Adrenal gland (tissue), 19 donors: ENCODE measurements at regions of chr2 and their contacts with region 1.

Region 1: GRCh38 chr2:69643602-69644505 is at the start of gene AAK1:
- DNase-seq: peak; percentile 86 to 92 (median 90)
- H3K4me3 ChIP-seq: peak within 1 kb of the TSS; percentile 71 to 90 (median 86)
- H3K27ac ChIP-seq: peak within 1 kb of the TSS; percentile 83 to 98 (median 95)
- H3K4me1 ChIP-seq: peaks cover 12 to 46% of the 10 kb centered on the region in 2 donors
- H3K27me3 ChIP-seq: no peaks in the 10 kb centered on the region
- CTCF ChIP-seq: peak in 1 of 6 experiments; percentile 3
- POLR2A ChIP-seq: peak; percentile 72 to 88
- total RNA-seq, gene AAK1: 44.1 to 106 (median 79.6) TPM

Region 2: DNA sequence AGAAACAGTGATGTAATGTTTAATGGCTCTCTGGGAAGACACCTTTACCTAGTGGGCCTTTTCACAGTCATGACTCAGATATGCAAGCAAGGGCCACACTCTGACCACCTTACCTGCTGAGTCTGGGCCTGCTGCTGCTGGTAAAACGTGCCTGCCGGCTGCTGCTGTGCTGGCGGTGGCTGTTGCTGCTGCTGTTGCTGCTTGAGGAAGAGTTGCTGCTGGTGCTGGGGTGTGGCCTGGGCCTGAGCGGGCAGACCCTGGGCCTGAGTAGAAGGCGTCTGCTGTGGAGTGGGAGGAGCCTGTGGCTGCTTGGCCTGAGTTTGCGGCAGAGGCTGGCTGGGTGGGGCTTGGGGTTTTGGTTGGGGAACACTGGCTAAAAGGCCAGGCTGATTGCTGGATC is 125.0 kb before region 1 on chr2:
- intact Hi-C with region 1: no loop called
- DNase-seq: no peak
- H3K4me3 ChIP-seq: no peak overlapping the region
- H3K27ac ChIP-seq: no peak overlapping the region
- H3K4me1 ChIP-seq: no peaks in the 10 kb centered on the region
- H3K27me3 ChIP-seq: no peaks in the 10 kb centered on the region
- CTCF ChIP-seq: no peak
- POLR2A ChIP-seq: no peak

Region 3: DNA sequence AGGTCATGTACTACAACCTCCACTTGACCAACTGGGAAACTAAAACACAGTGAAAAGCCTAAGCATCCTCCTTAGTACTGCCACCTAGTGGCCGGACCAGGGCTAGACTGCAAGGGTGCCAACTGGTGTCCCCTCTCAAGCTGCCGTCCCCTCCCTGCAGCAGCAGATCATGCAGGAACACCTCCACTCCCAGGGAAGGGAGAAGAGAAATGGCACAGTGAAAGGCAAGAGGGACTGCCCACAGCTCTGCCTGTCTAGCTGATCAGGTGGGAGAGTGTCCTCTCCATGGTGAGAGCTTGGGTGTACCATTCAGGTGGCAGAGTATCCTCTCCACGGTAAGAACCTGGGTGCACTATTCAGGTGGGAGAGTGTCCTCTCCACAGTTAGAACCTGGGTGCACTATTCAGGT is 78.4 kb before region 1 on chr2:
- intact Hi-C with region 1: loop called (anchors 10 kb)
- DNase-seq: peak; percentile 35 to 74 (median 44)
- H3K4me3 ChIP-seq: no peak overlapping the region
- H3K27ac ChIP-seq: no peak overlapping the region
- H3K4me1 ChIP-seq: peaks cover 0 to 20% of the 10 kb centered on the region in 2 donors
- H3K27me3 ChIP-seq: no peaks in the 10 kb centered on the region
- CTCF ChIP-seq: peak; percentile 29 to 63 (median 56)
- POLR2A ChIP-seq: no peak

Region 4: DNA sequence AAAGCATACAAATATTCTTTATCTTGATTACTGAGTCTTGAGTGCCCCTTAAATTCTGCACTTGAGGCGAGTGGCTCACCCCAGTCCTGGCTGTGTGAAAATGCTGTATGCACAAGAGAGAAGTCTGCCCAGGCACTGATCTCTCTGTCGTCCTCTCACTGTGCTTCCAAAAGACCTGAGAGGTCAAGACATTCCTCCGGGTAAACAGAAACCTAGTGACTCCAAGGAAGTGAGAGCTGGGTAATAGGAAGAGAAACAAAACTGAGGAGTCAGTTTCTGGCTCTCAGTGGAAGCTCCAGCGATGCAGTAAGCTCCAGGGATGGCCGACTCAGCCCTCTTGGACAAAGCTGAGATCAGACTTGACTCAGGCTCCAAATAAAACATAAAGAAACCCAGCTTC is 71.2 kb before region 1 on chr2:
- intact Hi-C with region 1: loop called (anchors 10 kb)
- DNase-seq: peak in 1 of 7 donors; percentile 32
- H3K4me3 ChIP-seq: no peak overlapping the region
- H3K27ac ChIP-seq: peak overlapping the region in 1 of 5 donors; percentile 10
- H3K4me1 ChIP-seq: peaks cover 0 to 35% of the 10 kb centered on the region in 2 donors
- H3K27me3 ChIP-seq: no peaks in the 10 kb centered on the region
- CTCF ChIP-seq: no peak
- POLR2A ChIP-seq: no peak